GM12878 (cell line): ENCODE measurements at regions of chr3 and their contacts with region 1.

Region 1: DNA sequence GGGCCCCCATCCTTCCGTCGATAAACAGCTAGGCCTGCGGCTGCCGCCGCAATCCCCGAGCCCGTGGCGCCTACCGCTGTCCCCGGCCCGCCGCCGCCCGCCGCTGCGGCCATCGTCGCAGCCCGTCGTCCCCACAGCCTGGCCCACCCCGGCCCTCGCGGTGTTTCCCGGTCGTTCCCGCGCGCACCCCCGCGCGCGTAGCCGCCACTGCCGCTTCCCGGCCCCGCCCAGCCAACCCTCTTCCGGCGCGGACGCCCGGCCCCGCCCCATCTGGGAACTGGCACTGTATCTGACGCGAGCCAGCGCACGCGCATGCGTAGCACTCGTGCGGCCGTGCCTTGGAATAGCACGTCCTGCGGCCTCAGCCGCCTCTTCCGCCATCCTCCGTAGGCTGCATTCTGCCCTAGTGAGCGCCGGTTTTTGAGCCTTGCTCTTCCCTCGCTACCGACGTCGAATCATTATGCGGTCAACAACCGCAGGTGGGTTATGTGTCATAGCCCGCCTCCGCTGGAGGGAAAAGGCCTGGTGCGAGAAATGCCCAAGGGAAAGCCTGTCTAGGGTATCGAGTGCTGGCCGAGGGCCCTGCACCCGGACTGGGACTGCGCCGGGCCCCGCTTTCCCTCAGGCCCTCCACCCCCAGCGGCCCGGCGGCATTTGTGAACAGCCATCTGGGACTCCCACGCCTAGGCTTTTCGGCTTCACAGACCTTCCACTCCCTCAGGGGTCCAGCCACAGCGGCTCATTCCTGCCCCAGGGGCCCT is at the start of gene SMARCC1:
- DNase-seq: peak; percentile 94
- ATAC-seq: peak; percentile 86
- H3K4me3 ChIP-seq: peak within 1 kb of the TSS; percentile 94
- H3K27ac ChIP-seq: peak within 1 kb of the TSS; percentile 97
- H3K4me1 ChIP-seq: peaks cover 5% of the 10 kb centered on the region
- H3K27me3 ChIP-seq: no peaks in the 10 kb centered on the region
- CTCF ChIP-seq: 0 out of 6 replicates have a peak, but pooled peaks of 1 of the 3 experiments have one; percentile 6
- EP300 ChIP-seq: peak; percentile 41 to 73; a peak in 2 of 4 replicates
- POLR2A ChIP-seq: peak; percentile 96
- RAD21 ChIP-seq: no peak
- polyA plus RNA-seq, gene SMARCC1: 26.6 to 29.2 TPM

Region 2: DNA sequence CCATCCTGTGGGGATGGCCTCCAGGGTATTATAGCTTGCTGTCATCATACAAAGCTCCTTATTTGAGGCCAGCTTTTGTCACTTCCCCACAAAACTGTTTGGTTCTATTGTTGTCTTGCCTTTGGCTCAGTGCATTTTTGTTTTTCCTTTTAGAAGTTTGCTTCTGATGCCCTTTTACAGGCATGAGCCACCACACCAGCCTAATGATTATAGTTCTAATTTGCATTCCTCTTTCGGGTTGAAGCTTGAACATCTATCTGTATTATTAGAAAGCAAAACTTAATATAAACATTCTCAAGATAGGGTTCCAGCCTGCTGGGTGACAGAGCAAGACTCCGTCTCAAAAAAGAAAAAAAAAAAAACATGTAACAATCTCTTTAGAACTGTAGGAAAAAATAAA is 39.9 kb before region 1 on chr3:
- CTCF ChIA-PET with region 1: interaction called, 5 read pairs
- POLR2A ChIA-PET with region 1: interaction called, 10 read pairs
- RAD21 ChIA-PET with region 1: interaction called, 13 read pairs
- SMC1A ChIA-PET with region 1: interaction called, 11 read pairs
- in situ Hi-C with region 1: no loop called
- intact Hi-C with region 1: loop called (anchors 5 kb)
- DNase-seq: peak; percentile 74
- ATAC-seq: peak; percentile 80
- H3K4me3 ChIP-seq: no peak overlapping the region
- H3K27ac ChIP-seq: peak overlapping the region; percentile 63
- H3K4me1 ChIP-seq: peaks cover 28% of the 10 kb centered on the region
- H3K27me3 ChIP-seq: no peaks in the 10 kb centered on the region
- CTCF ChIP-seq: no peak
- EP300 ChIP-seq: no peak
- POLR2A ChIP-seq: no peak
- RAD21 ChIP-seq: no peak

Region 3: DNA sequence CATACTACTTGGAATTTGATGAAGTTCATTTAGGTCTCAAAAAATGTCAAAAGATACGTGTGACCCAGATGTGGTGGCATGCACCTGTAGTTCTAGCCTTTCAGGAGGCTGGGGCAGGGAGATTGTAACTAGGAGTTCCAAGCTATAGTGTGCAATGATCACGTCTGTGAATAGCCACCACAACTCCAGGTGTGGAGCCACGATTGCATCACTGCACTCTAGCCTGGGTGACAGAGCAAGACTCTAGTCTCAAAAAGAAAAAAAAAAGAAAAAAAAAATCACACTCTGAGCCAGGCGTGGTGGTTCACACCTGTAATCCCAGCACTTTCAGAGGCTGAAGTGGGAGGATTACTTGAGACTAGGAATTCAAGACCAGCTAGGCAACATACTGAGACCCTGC is 220.1 kb after region 1 on chr3:
- CTCF ChIA-PET with region 1: no interaction called
- POLR2A ChIA-PET with region 1: no interaction called
- RAD21 ChIA-PET with region 1: no interaction called
- SMC1A ChIA-PET with region 1: no interaction called
- in situ Hi-C with region 1: no loop called
- intact Hi-C with region 1: no loop called
- DNase-seq: no peak
- ATAC-seq: no peak
- H3K4me3 ChIP-seq: no peak overlapping the region
- H3K27ac ChIP-seq: no peak overlapping the region
- H3K4me1 ChIP-seq: no peaks in the 10 kb centered on the region
- H3K27me3 ChIP-seq: no peaks in the 10 kb centered on the region
- CTCF ChIP-seq: no peak
- EP300 ChIP-seq: no peak
- POLR2A ChIP-seq: no peak
- RAD21 ChIP-seq: no peak

Region 4: GRCh38 chr3:48047841-48048456 is 266.1 kb after region 1 on chr3:
- CTCF ChIA-PET with region 1: no interaction called
- POLR2A ChIA-PET with region 1: no interaction called
- RAD21 ChIA-PET with region 1: no interaction called
- SMC1A ChIA-PET with region 1: no interaction called
- in situ Hi-C with region 1: no loop called
- intact Hi-C with region 1: no loop called
- DNase-seq: no peak
- ATAC-seq: no peak
- H3K4me3 ChIP-seq: no peak overlapping the region
- H3K27ac ChIP-seq: no peak overlapping the region
- H3K4me1 ChIP-seq: no peaks in the 10 kb centered on the region
- H3K27me3 ChIP-seq: no peaks in the 10 kb centered on the region
- CTCF ChIP-seq: no peak
- EP300 ChIP-seq: no peak
- POLR2A ChIP-seq: no peak
- RAD21 ChIP-seq: no peak

Region 5: GRCh38 chr3:48425218-48426075 is 643.6 kb after region 1 on chr3:
- CTCF ChIA-PET with region 1: no interaction called
- POLR2A ChIA-PET with region 1: no interaction called
- RAD21 ChIA-PET with region 1: no interaction called
- SMC1A ChIA-PET with region 1: no interaction called
- in situ Hi-C with region 1: no loop called
- intact Hi-C with region 1: no loop called
- DNase-seq: no peak
- ATAC-seq: no peak
- H3K4me3 ChIP-seq: no peak overlapping the region
- H3K27ac ChIP-seq: no peak overlapping the region
- H3K4me1 ChIP-seq: peaks cover 16% of the 10 kb centered on the region
- H3K27me3 ChIP-seq: no peaks in the 10 kb centered on the region
- CTCF ChIP-seq: no peak
- EP300 ChIP-seq: no peak
- POLR2A ChIP-seq: no peak
- RAD21 ChIP-seq: no peak